OCI-LY7 (cell line): ENCODE measurements at regions of chr7 and their contacts with region 1.

Region 1: GRCh38 chr7:155738652-155739537 is 73.4 kb downstream of the SHH start:
- DNase-seq: peak; percentile 84
- H3K4me3 ChIP-seq: no peak overlapping the region
- H3K27ac ChIP-seq: no peak overlapping the region
- H3K4me1 ChIP-seq: peaks cover 40% of the 10 kb centered on the region
- CTCF ChIP-seq: peak; percentile 96

Region 2: GRCh38 chr7:155763691-155764437 is 25.0 kb after region 1 on chr7:
- CTCF ChIA-PET with region 1: no interaction called
- POLR2A ChIA-PET with region 1: no interaction called
- intact Hi-C with region 1: loop called (anchors 1 kb)
- DNase-seq: no peak
- H3K4me3 ChIP-seq: no peak overlapping the region
- H3K27ac ChIP-seq: no peak overlapping the region
- H3K4me1 ChIP-seq: no peaks in the 10 kb centered on the region
- CTCF ChIP-seq: no peak

Region 3: DNA sequence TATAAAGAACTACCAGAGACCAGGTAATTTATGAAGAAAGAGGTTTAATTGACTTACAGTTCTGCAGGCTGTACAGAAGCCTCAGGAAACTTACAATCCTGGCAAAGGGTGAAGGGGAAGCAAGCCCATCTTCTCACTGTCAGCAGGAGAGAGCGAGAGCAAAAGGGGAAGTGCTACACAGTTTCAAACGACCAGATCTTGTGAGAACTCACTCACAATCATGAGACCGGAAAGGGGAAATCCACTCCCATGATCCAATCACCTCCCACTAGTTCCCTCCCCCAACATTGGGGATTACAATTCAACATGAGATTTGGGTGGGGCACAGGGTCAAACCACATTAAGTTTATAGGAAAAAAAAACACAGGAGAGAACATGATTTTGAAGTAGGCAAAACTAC is 295.5 kb after region 1 on chr7:
- CTCF ChIA-PET with region 1: no interaction called
- POLR2A ChIA-PET with region 1: no interaction called
- intact Hi-C with region 1: no loop called
- DNase-seq: peak; percentile 49
- H3K4me3 ChIP-seq: no peak overlapping the region
- H3K27ac ChIP-seq: no peak overlapping the region
- H3K4me1 ChIP-seq: peaks cover 7% of the 10 kb centered on the region
- CTCF ChIP-seq: no peak